ENCODE measurements at regions of chr11 and their contacts with region 1.

Region 1: GRCh38 chr11:20110908-20111669 is 49.2 kb downstream of the DBX1 start:
- DNase-seq: peak; percentile 65
- ATAC-seq: peak; percentile 70
- H3K4me3 Mint-ChIP-seq: no peak overlapping the region
- H3K27ac Mint-ChIP-seq: no peak overlapping the region
- H3K4me1 Mint-ChIP-seq: no peaks in the 10 kb centered on the region
- H3K27me3 Mint-ChIP-seq: no peaks in the 10 kb centered on the region

Region 2: DNA sequence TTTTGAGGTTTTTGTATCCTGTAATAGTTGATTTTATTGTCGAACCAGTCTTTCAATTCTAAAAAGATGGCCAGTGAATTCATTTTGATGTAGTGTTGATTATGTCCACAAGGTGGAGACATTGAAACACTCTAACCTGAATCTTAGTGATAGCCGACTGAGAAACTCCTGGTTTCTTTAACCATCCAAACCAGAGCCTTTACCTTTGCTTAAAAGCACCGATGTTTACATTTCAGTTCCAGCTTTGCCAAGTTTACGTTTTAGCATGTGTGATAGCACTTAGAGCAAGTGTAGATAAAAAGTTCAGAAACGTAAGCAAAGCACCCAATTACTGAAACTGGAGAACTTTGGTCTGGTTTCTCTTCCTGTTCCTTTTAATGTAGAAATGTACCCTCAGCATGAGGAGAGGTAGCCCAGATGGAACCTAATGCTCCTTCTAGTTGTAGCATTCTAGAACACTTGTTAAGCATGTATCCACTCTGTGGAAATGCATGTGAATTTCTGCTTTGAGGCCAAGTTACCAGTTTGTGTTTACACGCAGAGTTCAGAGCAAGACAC is 159.5 kb before region 1 on chr11:
- CTCF ChIA-PET with region 1: interaction called, 11 read pairs
- DNase-seq: no peak
- ATAC-seq: peak; percentile 61
- H3K4me3 Mint-ChIP-seq: peak overlapping the region; percentile 30
- H3K27ac Mint-ChIP-seq: no peak overlapping the region
- H3K4me1 Mint-ChIP-seq: peaks cover 6% of the 10 kb centered on the region
- H3K27me3 Mint-ChIP-seq: peaks cover 25% of the 10 kb centered on the region

Region 3: DNA sequence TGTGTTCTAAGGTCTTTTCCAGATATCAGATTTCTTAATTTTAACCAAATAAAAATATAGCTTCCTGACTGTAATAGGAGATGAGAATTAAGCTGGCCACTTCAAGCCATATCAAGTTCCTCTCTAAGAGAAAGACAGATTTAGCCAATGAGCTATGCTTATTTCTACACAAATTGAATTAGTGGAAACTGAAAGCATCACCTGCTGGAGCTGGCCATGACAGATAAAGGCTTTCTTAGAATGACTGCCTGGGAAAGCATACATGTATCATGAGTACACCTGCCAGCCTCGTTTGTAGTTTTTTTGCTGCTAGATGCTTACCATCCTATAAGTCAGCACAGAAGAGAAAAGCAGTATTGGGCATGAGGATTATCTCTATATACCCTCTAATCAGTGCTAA is 102.7 kb after region 1 on chr11:
- CTCF ChIA-PET with region 1: no interaction called
- DNase-seq: no peak
- ATAC-seq: no peak
- H3K4me3 Mint-ChIP-seq: no peak overlapping the region
- H3K27ac Mint-ChIP-seq: no peak overlapping the region
- H3K4me1 Mint-ChIP-seq: no peaks in the 10 kb centered on the region
- H3K27me3 Mint-ChIP-seq: peaks cover 31% of the 10 kb centered on the region

Measured in activated CD8-positive, alpha-beta memory T cell treated with anti-CD3 and anti-CD28 coated beads, Interleukin-2, amount 10 ng/mL, durations not matched to agents 7 days and 5 days (primary cell).